ENCODE measurements at regions of chr5 and their contacts with region 1.

Region 1: GRCh38 chr5:157917899-157918809 is 59.2 kb upstream of the CLINT1 start:
- DNase-seq: peak; percentile 33
- H3K4me3 ChIP-seq: no peak overlapping the region
- CTCF ChIP-seq: peak; percentile 59

Region 2: GRCh38 chr5:157903117-157903450 is 15.1 kb before region 1 on chr5:
- CTCF ChIA-PET with region 1: interaction called, 14 read pairs
- POLR2A ChIA-PET with region 1: no interaction called
- DNase-seq: no peak
- H3K4me3 ChIP-seq: no peak overlapping the region
- CTCF ChIP-seq: no peak

Region 3: DNA sequence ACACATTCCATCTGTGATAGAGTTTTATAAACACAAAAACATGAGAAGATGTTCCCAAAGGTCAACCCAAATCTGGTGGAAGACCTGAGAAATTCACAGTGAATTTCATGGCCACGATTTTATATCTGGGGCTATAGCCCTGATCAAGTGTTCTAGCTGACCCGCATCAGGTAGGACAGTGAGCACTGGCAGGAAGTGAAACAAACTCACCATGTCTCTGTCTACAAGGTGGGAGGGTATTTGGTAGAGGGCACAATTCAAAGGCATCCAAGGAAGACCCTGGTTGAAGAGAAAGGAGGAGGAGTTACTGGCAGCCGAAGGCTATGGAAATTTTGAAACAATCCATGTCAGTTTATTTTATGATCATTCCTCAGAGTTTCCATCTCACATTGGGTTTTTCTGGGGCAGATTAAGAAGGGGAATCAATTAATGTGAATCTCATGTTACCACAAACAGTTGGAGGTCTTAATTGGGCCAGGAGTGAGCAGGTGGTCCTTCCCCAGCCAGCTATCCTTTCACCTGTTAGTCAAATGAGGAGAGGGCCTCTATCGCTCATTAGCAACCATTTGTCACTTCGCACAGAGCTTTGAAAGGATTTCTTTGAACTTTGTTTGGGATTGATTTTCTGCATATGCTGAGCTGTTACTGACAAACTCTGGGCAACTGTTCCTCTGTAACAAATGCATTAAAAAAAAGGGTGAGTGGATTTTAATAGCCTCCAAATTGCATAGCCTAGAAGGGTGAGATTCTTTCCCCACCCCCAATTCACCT is 552.8 kb after region 1 on chr5:
- CTCF ChIA-PET with region 1: no interaction called
- POLR2A ChIA-PET with region 1: no interaction called
- DNase-seq: no peak
- H3K4me3 ChIP-seq: no peak overlapping the region
- CTCF ChIP-seq: no peak